ENCODE measurements at regions of chr12 and their contacts with region 1.

Region 1: GRCh38 chr12:55973598-55974307 is at the start of gene RAB5B:
- DNase-seq: peak; percentile 92 to 100 (median 99)
- ATAC-seq: peak; percentile 91 to 93 (median 92)
- H3K4me3 ChIP-seq: peak within 1 kb of the TSS; percentile 69 to 89
- H3K4me3 Mint-ChIP-seq: no peak within 1 kb of the TSS
- H3K27ac ChIP-seq: peak within 1 kb of the TSS; percentile 70
- H3K27ac Mint-ChIP-seq: no peak within 1 kb of the TSS
- H3K4me1 ChIP-seq: peaks cover 18 to 21% of the 10 kb centered on the region in 2 experiments
- H3K4me1 Mint-ChIP-seq: peaks cover 22 to 27% (median 24%) of the 10 kb centered on the region in 3 donors
- H3K27me3 ChIP-seq: no peaks in the 10 kb centered on the region
- H3K27me3 Mint-ChIP-seq: no peaks in the 10 kb centered on the region
- total RNA-seq, gene RAB5B: 58.6 to 99.8 (median 85.7) TPM

Region 2: GRCh38 chr12:55817346-55818139 is 156.2 kb before region 1 on chr12 and contains the starts of genes ORMDL2 and SARNP:
- CTCF ChIA-PET with region 1: interaction called in 1 of 2 experiments, 18 read pairs
- POLR2A ChIA-PET with region 1: interaction called, 12 to 13 read pairs
- DNase-seq: peak; percentile 77 to 100 (median 97)
- ATAC-seq: peak; percentile 91 to 96 (median 94)
- H3K4me3 ChIP-seq: peak within 1 kb of the TSS; percentile 83 to 97
- H3K4me3 Mint-ChIP-seq: no peak within 1 kb of the TSS
- H3K27ac ChIP-seq: peak within 1 kb of the TSS; percentile 65
- H3K27ac Mint-ChIP-seq: no peak within 1 kb of the TSS
- H3K4me1 ChIP-seq: peaks cover 24 to 26% of the 10 kb centered on the region in 2 experiments
- H3K4me1 Mint-ChIP-seq: peaks cover 41 to 51% (median 50%) of the 10 kb centered on the region in 3 donors
- H3K27me3 ChIP-seq: no peaks in the 10 kb centered on the region
- H3K27me3 Mint-ChIP-seq: no peaks in the 10 kb centered on the region
- total RNA-seq, gene ORMDL2: 19.0 to 46.8 (median 41.6) TPM
- total RNA-seq, gene SARNP: 36.9 to 50.3 (median 46.8) TPM